ENCODE measurements at regions of chr6 and their contacts with region 1.

Region 1: DNA sequence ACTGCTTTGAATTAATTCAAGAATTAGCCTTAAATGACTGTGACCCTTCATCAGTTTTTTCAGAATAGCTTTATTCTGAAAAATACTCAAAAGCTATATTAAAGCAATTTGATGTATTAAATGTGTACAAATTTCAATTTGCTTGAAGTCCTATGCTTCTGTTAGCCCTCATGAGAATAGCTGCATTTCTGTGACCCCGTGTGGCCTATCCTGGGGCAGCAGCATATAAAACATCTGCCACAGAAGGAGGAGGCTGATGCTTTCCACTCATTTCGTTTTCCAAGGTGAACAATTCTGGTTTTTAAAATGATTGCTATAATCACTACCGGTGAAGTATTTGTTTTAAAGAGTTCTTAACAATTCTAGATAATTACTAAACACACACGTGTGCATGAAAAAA is 360.3 kb downstream of the BTBD9 start:
- DNase-seq: no peak
- CTCF ChIP-seq: no peak

Region 2: DNA sequence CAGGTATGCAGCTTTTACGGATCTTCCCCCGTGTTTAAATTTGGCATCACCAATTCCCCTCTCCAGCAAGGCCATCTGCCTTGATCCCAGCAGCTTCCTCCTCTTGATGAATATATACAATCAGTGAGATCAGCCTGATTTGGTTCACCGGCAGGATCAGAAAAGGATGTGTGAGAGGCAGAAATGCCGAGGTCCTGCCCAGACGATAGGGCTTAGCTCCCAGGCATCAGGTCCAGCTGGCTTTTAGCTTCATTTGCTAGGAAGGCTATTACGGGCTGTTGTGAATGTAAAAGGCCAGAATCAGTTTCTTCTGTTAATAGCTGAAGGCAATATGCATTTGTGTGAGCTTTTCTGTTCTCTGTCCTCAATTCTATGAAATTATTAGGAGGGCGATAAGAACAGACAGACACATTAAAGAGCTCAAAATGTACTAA is 12.5 kb before region 1 on chr6:
- CTCF ChIA-PET with region 1: interaction called, 10 read pairs
- POLR2A ChIA-PET with region 1: no interaction called
- DNase-seq: no peak
- CTCF ChIP-seq: no peak

Region 3: GRCh38 chr6:38290133-38290799 is 10.8 kb after region 1 on chr6:
- CTCF ChIA-PET with region 1: interaction called, 15 read pairs
- POLR2A ChIA-PET with region 1: no interaction called
- DNase-seq: no peak
- CTCF ChIP-seq: no peak

Measured in GM10248 (cell line).